ENCODE measurements at regions of chr2 and their contacts with region 1.

Region 1: GRCh38 chr2:135797497-135798274 is 39.3 kb downstream of the LCT start:
- DNase-seq: no peak
- H3K4me3 ChIP-seq: no peak overlapping the region
- CTCF ChIP-seq: peak; percentile 97

Region 2: DNA sequence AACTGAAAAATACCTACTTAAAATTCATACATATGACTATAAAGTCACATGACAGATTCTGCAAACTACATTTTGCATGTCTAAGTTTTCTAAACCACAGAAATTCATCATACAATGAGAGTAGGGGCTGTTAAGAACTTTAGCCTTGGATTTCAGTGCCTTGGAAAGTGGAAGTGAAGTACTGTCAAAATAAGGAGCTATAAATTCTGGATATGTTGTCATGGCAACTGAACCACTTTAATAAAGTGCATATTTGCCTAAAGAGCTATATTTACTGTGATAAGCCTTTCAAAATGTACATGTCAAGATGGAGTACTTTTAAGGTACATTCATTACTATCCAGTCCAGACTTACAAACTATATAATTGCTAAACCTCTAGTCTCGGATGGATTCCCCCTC is 518.5 kb before region 1 on chr2:
- CTCF ChIA-PET with region 1: no interaction called
- POLR2A ChIA-PET with region 1: no interaction called
- DNase-seq: no peak
- H3K4me3 ChIP-seq: no peak overlapping the region
- CTCF ChIP-seq: no peak

Region 3: GRCh38 chr2:135741395-135742324 is 56.0 kb before region 1 on chr2 and contains the start of gene UBXN4:
- CTCF ChIA-PET with region 1: interaction called, 17 read pairs
- POLR2A ChIA-PET with region 1: no interaction called
- DNase-seq: peak; percentile 94
- H3K4me3 ChIP-seq: peak within 1 kb of the TSS; percentile 90
- CTCF ChIP-seq: peak; percentile 43

Region 4: DNA sequence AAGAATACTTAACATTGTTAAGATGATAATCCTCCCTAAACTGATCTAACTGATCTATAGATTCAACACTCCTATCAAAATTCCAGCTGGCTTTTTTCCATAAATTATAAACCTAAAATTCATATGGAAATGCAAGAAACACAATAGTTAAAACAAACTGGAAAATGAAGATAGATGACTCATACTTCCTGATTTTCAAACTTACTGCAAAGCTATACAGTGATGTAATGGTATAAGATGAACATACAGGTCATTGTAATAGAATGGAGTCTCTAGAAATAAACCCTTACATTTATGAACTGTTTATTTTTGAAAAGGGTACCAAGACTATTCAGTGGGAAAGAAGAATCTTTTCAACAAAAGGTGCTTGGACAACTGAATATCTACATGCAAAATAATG is 23.8 kb before region 1 on chr2:
- CTCF ChIA-PET with region 1: interaction called, 17 read pairs
- POLR2A ChIA-PET with region 1: no interaction called
- DNase-seq: no peak
- H3K4me3 ChIP-seq: no peak overlapping the region
- CTCF ChIP-seq: no peak

Region 5: DNA sequence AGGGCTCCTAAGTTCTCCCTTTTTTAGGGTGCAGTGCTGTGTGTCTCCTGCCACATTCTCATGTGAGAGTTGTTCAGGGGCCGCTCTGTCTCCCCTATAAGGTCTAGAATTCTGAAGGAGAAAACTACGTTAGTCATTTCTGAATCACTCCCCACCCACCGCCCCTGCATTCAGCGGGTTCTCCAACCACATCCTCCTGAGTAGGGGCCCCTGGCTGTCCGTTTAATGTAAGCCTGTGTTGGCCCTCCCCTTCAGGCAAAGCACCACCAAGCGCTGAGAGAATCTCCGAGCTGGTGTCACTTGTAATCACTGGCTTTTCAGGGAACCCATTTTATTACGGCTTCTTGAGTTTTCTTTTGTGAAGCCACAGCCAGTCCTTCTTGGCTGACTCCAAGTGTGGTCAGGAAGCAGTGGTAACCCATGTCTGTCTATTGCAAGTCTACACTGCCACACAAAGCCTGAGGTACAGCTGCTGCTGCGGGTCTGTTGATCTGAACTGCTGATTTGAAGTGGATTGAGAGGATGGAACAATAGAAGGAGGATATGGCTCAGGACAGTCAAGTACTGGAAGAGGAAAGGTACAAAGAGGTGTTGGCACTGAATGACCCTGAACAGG is 22.4 kb after region 1 on chr2:
- CTCF ChIA-PET with region 1: interaction called, 78 read pairs
- POLR2A ChIA-PET with region 1: no interaction called
- DNase-seq: no peak
- H3K4me3 ChIP-seq: no peak overlapping the region
- CTCF ChIP-seq: no peak

Region 6: DNA sequence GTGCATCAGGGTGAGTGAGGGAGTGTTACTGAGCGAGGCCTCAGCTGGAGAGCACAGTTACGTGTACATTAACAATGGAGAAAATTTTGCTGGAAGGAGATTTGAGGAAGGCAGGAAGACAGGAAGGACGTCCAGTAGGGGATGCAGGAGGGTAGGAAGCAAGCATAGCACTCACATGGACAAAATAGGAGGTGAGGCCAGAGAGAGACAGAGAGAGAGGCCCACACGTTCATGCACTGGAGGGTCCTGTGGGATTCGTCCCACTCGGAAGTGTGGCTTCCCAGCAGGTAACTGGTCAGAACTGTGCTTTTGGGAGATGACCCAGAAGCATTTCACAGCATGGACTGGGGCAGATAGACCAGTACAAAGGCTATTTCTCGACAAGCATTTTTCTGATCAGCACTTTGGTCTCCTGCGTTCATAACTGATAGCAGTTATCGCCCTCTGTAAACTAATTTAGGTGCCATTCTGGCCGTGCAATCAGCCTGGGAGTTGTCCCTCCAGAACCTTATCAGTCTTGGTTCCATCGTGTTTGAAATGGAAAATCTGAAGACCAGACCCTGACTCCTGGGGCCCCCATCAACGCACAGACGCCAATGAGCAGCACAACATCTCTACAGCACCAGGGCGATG is 33.6 kb after region 1 on chr2:
- CTCF ChIA-PET with region 1: interaction called, 33 read pairs
- POLR2A ChIA-PET with region 1: no interaction called
- DNase-seq: no peak
- H3K4me3 ChIP-seq: no peak overlapping the region
- CTCF ChIP-seq: no peak

Measured in AG04449 (cell line).